AG04449 (cell line): ENCODE measurements at regions of chr9 and their contacts with region 1.

Region 1: GRCh38 chr9:136327313-136327974 is at the start of gene GPSM1:
- DNase-seq: no peak
- H3K4me3 ChIP-seq: peak within 1 kb of the TSS; percentile 79
- CTCF ChIP-seq: no peak

Region 2: GRCh38 chr9:136255896-136256890 is 71.3 kb before region 1 on chr9:
- CTCF ChIA-PET with region 1: no interaction called
- POLR2A ChIA-PET with region 1: no interaction called
- DNase-seq: no peak
- H3K4me3 ChIP-seq: no peak overlapping the region
- CTCF ChIP-seq: no peak

Region 3: DNA sequence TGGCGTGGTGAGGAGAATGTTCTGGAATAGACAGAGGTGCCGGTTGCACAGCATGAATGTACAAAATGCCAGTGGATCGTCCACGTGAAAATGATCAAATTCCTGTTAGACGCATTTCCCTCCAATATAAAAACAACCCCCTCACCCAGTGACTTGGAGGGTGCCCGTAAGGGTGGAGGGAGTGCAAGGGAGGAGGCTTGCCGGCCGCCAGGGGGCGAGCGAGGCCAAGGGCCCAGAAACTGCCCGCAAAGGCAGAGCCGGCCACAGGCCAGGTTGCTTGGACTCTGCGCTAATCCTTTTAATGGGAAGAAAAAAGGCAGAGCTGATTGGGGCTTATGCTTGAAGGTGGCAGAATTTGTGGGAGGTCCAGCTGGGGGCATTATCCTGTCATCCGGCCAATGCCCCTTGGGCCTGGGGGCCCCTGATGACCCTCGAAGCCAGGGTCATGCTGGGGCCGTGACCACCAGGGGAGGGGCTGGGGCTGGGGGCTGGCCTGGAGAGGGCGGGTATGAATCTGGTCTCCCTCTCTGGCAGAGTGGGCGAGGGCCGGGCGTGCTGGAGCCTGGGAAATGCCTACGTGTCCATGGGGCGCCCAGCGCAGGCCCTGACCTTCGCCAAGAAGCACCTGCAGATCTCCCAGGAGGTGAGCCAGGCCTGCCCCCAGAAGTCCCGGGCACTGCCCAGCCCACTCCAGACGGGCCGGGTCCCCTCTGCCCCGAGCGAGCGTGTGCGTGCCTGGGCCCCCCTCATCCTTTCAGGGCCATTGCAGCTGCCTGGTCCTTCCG is 11.9 kb after region 1 on chr9:
- CTCF ChIA-PET with region 1: interaction called, 29 read pairs
- POLR2A ChIA-PET with region 1: interaction called, 5 read pairs
- DNase-seq: no peak
- H3K4me3 ChIP-seq: no peak overlapping the region
- CTCF ChIP-seq: peak; percentile 82

Region 4: DNA sequence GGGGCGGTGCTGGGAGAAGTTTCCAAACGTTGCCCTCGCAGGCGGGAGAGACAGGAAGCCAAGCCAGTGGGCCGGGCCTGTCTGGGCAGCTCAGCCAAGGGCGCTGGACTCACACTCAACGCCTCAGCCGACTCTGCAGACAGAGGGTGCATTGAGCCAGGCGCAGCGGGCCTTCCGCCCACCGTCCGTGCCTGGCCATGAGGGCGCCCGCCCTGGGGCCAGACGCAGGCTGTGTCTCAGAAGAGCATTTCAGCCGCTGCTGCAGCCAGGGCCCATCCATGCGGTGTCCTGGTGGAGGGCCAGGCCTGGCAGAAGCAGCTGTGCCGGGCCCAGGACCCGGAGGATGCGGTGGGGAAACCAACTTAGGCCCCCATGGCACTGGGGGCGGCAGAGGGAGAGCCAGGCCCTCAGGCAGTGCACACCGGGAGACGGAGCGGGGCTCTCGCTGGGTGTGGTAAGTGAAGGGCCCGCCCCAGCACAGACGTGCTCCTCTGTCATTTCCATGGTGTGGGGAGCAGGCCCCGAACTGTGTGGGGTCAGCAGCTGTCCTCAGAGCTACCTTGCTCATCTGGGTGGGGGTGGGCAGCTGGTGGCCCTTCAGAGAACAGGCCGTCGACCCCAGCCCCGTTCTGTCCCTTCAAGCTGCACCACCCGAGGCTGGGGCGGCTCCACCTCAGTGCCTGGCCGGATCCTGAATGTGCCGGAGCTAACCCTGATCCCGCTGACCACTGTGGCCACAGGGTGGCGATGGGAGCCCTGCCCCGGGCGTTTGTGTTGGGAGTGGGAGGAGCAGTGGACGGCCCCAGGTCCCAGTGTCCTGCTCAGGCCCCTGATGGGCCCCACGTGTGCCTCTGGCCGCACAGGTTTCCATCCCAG is 18.1 kb after region 1 on chr9:
- CTCF ChIA-PET with region 1: interaction called, 29 read pairs
- POLR2A ChIA-PET with region 1: interaction called, 4 read pairs
- DNase-seq: no peak
- H3K4me3 ChIP-seq: no peak overlapping the region
- CTCF ChIP-seq: peak; percentile 52

Region 5: GRCh38 chr9:136363606-136364370 is 36.3 kb after region 1 on chr9 and contains the start of gene DNLZ:
- CTCF ChIA-PET with region 1: interaction called, 14 read pairs
- POLR2A ChIA-PET with region 1: interaction called, 11 read pairs
- DNase-seq: no peak
- H3K4me3 ChIP-seq: peak within 1 kb of the TSS; percentile 77
- CTCF ChIP-seq: peak; percentile 93

Region 6: DNA sequence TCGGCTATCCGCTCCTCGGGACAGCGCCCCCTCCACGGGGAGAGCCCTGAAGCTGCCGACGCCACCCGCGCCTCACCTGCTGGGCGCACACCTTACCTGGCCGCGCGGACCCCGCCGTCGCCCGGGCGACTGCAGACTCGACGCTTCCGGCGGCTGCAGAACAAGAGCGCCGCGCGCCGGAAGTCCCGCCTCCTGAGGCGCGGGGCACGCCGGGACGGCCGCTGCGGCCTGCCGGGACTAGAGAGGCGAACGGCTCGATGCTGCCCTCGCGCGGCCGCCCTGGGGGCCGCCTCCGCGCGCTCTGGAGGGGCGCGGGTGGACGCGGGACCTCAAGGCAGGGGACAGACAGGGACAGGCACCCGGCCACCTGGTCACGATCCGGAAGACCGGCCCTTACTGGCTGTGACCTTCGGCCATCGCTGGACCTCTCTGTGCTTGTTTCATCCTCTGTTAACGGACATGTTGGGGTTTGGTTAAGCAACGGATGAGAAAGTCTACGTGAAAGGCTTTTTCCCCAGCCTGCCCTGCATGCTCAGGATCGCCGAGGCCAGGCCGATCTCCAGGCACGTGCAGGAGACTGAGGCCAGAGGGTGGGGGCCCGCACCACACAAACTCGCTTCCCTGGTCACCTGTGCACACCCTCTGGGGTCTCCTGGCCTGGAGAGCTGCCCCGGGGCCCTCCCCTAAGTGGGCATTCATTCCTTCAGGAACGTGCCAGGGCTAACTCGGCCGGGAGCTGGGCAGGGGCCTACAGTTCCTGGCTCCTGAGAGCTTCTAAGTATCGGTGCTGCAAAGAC is 72.8 kb after region 1 on chr9 and contains the start of gene SNAPC4:
- CTCF ChIA-PET with region 1: interaction called, 13 read pairs
- POLR2A ChIA-PET with region 1: no interaction called
- DNase-seq: no peak
- H3K4me3 ChIP-seq: peak within 1 kb of the TSS; percentile 83
- CTCF ChIP-seq: peak; percentile 80